CD4-positive, alpha-beta memory T cell (primary cell): ENCODE measurements at regions of chr1 and their contacts with region 1.

Region 1: DNA sequence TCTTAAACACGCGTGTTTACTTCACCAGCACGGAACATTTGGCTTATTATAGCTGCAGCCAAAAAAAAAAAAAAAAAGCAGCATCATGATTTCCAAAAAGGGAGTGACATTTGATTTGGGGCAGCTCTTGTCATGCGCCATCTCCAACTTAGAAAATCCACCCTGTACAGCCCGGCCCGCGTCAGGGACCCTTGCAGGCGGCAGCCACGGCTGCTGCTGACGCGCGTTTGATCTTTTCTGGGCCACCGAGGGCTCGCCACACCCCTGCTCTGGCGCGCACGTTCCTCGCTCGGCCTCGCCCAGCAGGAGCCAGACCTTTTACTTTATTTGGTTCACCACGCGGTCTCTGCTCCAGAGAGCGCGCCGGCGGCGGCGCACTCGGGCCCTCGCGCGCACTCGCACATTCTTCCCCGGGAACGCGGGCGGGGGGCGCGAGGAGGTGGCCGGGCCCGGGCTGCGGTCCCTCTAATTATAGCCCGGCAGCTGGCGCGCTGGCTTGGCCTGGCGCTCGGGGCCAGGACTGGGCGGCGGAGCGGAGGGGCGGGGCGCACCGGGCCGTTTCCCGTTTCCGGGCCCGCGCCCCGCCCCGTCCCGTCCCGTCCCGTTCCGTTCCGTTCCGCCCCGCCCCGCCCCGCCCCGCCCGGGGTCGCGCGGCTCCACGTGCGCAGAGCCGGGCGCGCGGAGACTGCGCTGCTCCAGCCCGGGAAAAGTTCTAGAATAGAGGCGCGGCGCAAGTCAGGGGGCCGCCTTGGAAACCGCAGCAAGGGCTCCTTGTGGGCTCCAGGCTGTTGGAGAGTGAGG is 10.2 kb downstream of the IRF2BP2 start:
- DNase-seq: peak; percentile 81 to 95 (median 84)
- H3K4me3 ChIP-seq: peak overlapping the region; percentile 17 to 46
- H3K4me3 Mint-ChIP-seq: peak overlapping the region; percentile 84 to 95 (median 88)
- H3K27ac ChIP-seq: peak overlapping the region; percentile 96
- H3K27ac Mint-ChIP-seq: peak overlapping the region; percentile 92 to 99 (median 97)
- H3K4me1 ChIP-seq: peaks cover 56% of the 10 kb centered on the region
- H3K4me1 Mint-ChIP-seq: peaks cover 37 to 64% (median 48%) of the 10 kb centered on the region in 4 donors
- H3K27me3 ChIP-seq: no peaks in the 10 kb centered on the region
- H3K27me3 Mint-ChIP-seq: no peaks in the 10 kb centered on the region

Region 2: GRCh38 chr1:234499119-234499942 is 100.5 kb before region 1 on chr1:
- CTCF ChIA-PET with region 1: interaction called, 11 read pairs
- POLR2A ChIA-PET with region 1: interaction called, 7 read pairs
- intact Hi-C with region 1: loop called (anchors 2 kb)
- DNase-seq: peak; percentile 72 to 78 (median 74)
- H3K4me3 ChIP-seq: no peak overlapping the region
- H3K4me3 Mint-ChIP-seq: peak overlapping the region; percentile 28 to 62 (median 43)
- H3K27ac ChIP-seq: no peak overlapping the region
- H3K27ac Mint-ChIP-seq: peak overlapping the region in 6 of 7 donors; percentile 15 to 63 (median 48)
- H3K4me1 ChIP-seq: peaks cover 11% of the 10 kb centered on the region
- H3K4me1 Mint-ChIP-seq: peaks cover 6 to 11% (median 9%) of the 10 kb centered on the region in 4 donors
- H3K27me3 ChIP-seq: no peaks in the 10 kb centered on the region
- H3K27me3 Mint-ChIP-seq: peaks cover 2 to 13% of the 10 kb centered on the region in 2 donors

Region 3: GRCh38 chr1:234628089-234628488 is 28.3 kb after region 1 on chr1:
- CTCF ChIA-PET with region 1: no interaction called
- POLR2A ChIA-PET with region 1: no interaction called
- intact Hi-C with region 1: no loop called
- DNase-seq: no peak
- H3K4me3 ChIP-seq: no peak overlapping the region
- H3K4me3 Mint-ChIP-seq: no peak overlapping the region
- H3K27ac ChIP-seq: no peak overlapping the region
- H3K27ac Mint-ChIP-seq: no peak overlapping the region
- H3K4me1 ChIP-seq: no peaks in the 10 kb centered on the region
- H3K4me1 Mint-ChIP-seq: no peaks in the 10 kb centered on the region
- H3K27me3 ChIP-seq: no peaks in the 10 kb centered on the region
- H3K27me3 Mint-ChIP-seq: no peaks in the 10 kb centered on the region

Region 4: DNA sequence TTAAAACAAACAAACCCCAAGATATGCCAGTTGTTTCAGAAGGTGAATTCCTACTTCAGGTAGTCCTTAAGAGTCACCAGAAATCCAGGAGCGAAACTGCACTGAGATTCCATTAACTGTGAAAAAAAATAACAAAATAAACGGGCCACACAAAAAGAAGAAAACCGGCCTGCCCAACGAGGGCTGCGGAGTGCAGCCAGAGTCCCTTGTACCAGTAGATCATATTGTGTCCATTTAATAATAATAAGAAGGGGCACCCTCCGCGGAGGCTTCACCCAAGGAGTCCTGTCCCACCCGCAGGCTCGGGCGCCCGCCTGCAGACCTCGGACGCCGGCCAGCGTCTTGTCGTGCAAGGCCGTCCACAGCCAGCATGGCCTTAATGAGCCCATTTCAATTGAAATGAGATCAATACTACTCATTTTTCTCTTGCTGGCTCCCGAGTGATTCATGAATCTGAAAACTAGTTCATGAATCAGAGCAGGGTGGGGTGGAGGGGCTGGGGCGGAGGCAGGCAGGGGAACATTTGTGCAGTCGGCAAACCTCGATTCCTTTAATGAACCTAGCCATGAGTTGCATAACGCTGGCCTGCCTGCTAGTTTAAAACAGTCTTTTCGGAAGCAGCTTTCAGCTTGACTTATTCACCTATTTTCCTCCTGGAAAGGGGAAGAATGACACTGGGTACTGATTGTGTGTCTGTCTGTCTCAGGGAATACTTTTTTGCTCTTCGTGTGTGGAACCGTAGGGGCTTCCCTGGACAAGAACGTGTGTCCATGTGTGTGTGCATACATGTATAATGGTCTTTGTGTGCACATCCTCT is 123.3 kb after region 1 on chr1:
- CTCF ChIA-PET with region 1: interaction called, 18 read pairs
- POLR2A ChIA-PET with region 1: interaction called, 146 read pairs
- intact Hi-C with region 1: no loop called
- DNase-seq: peak in 1 of 5 donors; percentile 82
- H3K4me3 ChIP-seq: peak overlapping the region; percentile 0 to 41
- H3K4me3 Mint-ChIP-seq: peak overlapping the region; percentile 70 to 89 (median 82)
- H3K27ac ChIP-seq: peak overlapping the region; percentile 96
- H3K27ac Mint-ChIP-seq: peak overlapping the region; percentile 95 to 100 (median 98)
- H3K4me1 ChIP-seq: peaks cover 66% of the 10 kb centered on the region
- H3K4me1 Mint-ChIP-seq: peaks cover 45 to 85% (median 65%) of the 10 kb centered on the region in 4 donors
- H3K27me3 ChIP-seq: no peaks in the 10 kb centered on the region
- H3K27me3 Mint-ChIP-seq: peaks cover 0 to 3% of the 10 kb centered on the region in 2 donors

Region 5: GRCh38 chr1:234842726-234843641 is 243.2 kb after region 1 on chr1:
- CTCF ChIA-PET with region 1: interaction called, 6 read pairs
- POLR2A ChIA-PET with region 1: interaction called, 12 read pairs
- intact Hi-C with region 1: no loop called
- DNase-seq: peak; percentile 34 to 76 (median 44)
- H3K4me3 ChIP-seq: peak overlapping the region in 1 of 2 donors; percentile 28
- H3K4me3 Mint-ChIP-seq: peak overlapping the region; percentile 33 to 83 (median 58)
- H3K27ac ChIP-seq: peak overlapping the region; percentile 39
- H3K27ac Mint-ChIP-seq: peak overlapping the region; percentile 76 to 91 (median 83)
- H3K4me1 ChIP-seq: peaks cover 65% of the 10 kb centered on the region
- H3K4me1 Mint-ChIP-seq: peaks cover 47 to 73% (median 60%) of the 10 kb centered on the region in 4 donors
- H3K27me3 ChIP-seq: no peaks in the 10 kb centered on the region
- H3K27me3 Mint-ChIP-seq: no peaks in the 10 kb centered on the region

Region 6: GRCh38 chr1:234925440-234926263 is 325.8 kb after region 1 on chr1:
- CTCF ChIA-PET with region 1: interaction called, 4 read pairs
- POLR2A ChIA-PET with region 1: interaction called, 8 read pairs
- intact Hi-C with region 1: loop called (anchors 5 kb)
- DNase-seq: peak in 4 of 5 donors; percentile 33 to 55 (median 46)
- H3K4me3 ChIP-seq: peak overlapping the region; percentile 27 to 48
- H3K4me3 Mint-ChIP-seq: peak overlapping the region; percentile 73 to 92 (median 84)
- H3K27ac ChIP-seq: no peak overlapping the region
- H3K27ac Mint-ChIP-seq: peak overlapping the region; percentile 85 to 99 (median 92)
- H3K4me1 ChIP-seq: peaks cover 49% of the 10 kb centered on the region
- H3K4me1 Mint-ChIP-seq: peaks cover 31 to 49% (median 43%) of the 10 kb centered on the region in 4 donors
- H3K27me3 ChIP-seq: no peaks in the 10 kb centered on the region
- H3K27me3 Mint-ChIP-seq: no peaks in the 10 kb centered on the region

Region 7: GRCh38 chr1:235011599-235012435 is 412.0 kb after region 1 on chr1:
- CTCF ChIA-PET with region 1: interaction called, 3 read pairs
- POLR2A ChIA-PET with region 1: interaction called, 18 read pairs
- intact Hi-C with region 1: loop called (anchors 1 kb)
- DNase-seq: peak; percentile 93 to 99 (median 97)
- H3K4me3 ChIP-seq: peak overlapping the region in 1 of 2 donors; percentile 61
- H3K4me3 Mint-ChIP-seq: peak overlapping the region; percentile 75 to 90 (median 82)
- H3K27ac ChIP-seq: peak overlapping the region; percentile 91
- H3K27ac Mint-ChIP-seq: peak overlapping the region; percentile 93 to 99 (median 99)
- H3K4me1 ChIP-seq: peaks cover 45% of the 10 kb centered on the region
- H3K4me1 Mint-ChIP-seq: peaks cover 43 to 73% (median 58%) of the 10 kb centered on the region in 4 donors
- H3K27me3 ChIP-seq: no peaks in the 10 kb centered on the region
- H3K27me3 Mint-ChIP-seq: no peaks in the 10 kb centered on the region